PC-3 (cell line): ENCODE measurements at regions of chr3 and their contacts with region 1.

Region 1: DNA sequence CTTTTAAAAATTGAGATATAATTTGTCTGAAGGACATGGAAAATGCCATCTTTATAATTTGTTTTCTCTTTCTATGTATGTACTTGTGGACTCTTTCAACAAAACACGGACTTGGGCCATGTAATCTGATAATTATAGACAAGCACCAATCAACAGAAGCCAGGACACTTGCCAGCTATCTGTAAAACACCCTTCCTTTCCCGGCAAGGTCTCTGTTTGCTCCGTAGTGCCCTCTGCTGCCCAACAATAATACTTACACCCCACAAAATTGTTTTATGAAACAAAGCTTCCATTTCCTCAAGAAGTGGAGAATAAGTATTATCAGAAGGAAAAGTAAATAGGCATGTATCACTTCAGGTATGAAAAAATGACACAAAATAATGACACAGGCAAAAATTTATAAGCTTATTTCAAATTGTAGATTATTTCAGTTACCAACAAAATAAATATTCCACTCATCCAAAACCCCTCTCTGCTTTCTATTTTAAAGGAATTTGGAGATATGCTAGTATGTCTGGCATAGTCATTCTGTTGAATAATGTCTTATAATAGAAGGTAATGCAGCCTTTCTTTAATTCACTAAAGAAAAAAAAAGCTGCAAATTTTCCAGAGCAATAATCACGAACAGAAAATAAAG is 32.8 kb downstream of the MYH15 start:
- DNase-seq: peak; percentile 78
- ATAC-seq: peak; percentile 58
- H3K4me3 ChIP-seq: no peak overlapping the region
- H3K27ac ChIP-seq: no peak overlapping the region
- H3K4me1 ChIP-seq: peaks cover 20% of the 10 kb centered on the region
- H3K27me3 ChIP-seq: no peaks in the 10 kb centered on the region
- CTCF ChIP-seq: peak; percentile 91

Region 2: GRCh38 chr3:107676469-107677309 is 800.9 kb before region 1 on chr3:
- CTCF ChIA-PET with region 1: no interaction called
- POLR2A ChIA-PET with region 1: no interaction called
- intact Hi-C with region 1: loop called (anchors 10 kb)
- DNase-seq: peak; percentile 72
- ATAC-seq: peak; percentile 68
- H3K4me3 ChIP-seq: no peak overlapping the region
- H3K27ac ChIP-seq: no peak overlapping the region
- H3K4me1 ChIP-seq: no peaks in the 10 kb centered on the region
- H3K27me3 ChIP-seq: no peaks in the 10 kb centered on the region
- CTCF ChIP-seq: peak; percentile 76

Region 3: GRCh38 chr3:108090701-108091451 is 386.8 kb before region 1 on chr3 and contains the start of gene CD47:
- CTCF ChIA-PET with region 1: no interaction called
- POLR2A ChIA-PET with region 1: no interaction called
- intact Hi-C with region 1: loop called (anchors 2 kb)
- DNase-seq: peak; percentile 92
- ATAC-seq: peak; percentile 79
- H3K4me3 ChIP-seq: peak within 1 kb of the TSS; percentile 96
- H3K27ac ChIP-seq: peak within 1 kb of the TSS; percentile 17
- H3K4me1 ChIP-seq: peaks cover 15% of the 10 kb centered on the region; the same call in 1 of the 2 replicates
- H3K27me3 ChIP-seq: no peaks in the 10 kb centered on the region
- CTCF ChIP-seq: no peak
- total RNA-seq, gene CD47: 48.4 and 63.6 TPM in 2 replicates

Region 4: GRCh38 chr3:108153451-108153981 is 324.1 kb before region 1 on chr3:
- CTCF ChIA-PET with region 1: interaction called, 4 read pairs
- POLR2A ChIA-PET with region 1: no interaction called
- intact Hi-C with region 1: loop called (anchors 2 kb)
- DNase-seq: peak; percentile 71
- ATAC-seq: peak; percentile 70; the same call in 1 of the 2 replicates
- H3K4me3 ChIP-seq: no peak overlapping the region
- H3K27ac ChIP-seq: no peak overlapping the region
- H3K4me1 ChIP-seq: peaks cover 9% of the 10 kb centered on the region; the same call in 1 of the 2 replicates
- H3K27me3 ChIP-seq: no peaks in the 10 kb centered on the region
- CTCF ChIP-seq: peak; percentile 76

Region 5: GRCh38 chr3:108301695-108302404 is 175.8 kb before region 1 on chr3:
- CTCF ChIA-PET with region 1: no interaction called
- POLR2A ChIA-PET with region 1: no interaction called
- intact Hi-C with region 1: loop called (anchors 10 kb)
- DNase-seq: peak; percentile 51
- ATAC-seq: no peak
- H3K4me3 ChIP-seq: no peak overlapping the region
- H3K27ac ChIP-seq: no peak overlapping the region
- H3K4me1 ChIP-seq: peaks cover 32% of the 10 kb centered on the region
- H3K27me3 ChIP-seq: no peaks in the 10 kb centered on the region
- CTCF ChIP-seq: no peak

Region 6: GRCh38 chr3:108342837-108343478 is 134.7 kb before region 1 on chr3:
- CTCF ChIA-PET with region 1: no interaction called
- POLR2A ChIA-PET with region 1: no interaction called
- intact Hi-C with region 1: loop called (anchors 1 kb)
- DNase-seq: peak; percentile 80
- ATAC-seq: peak; percentile 93
- H3K4me3 ChIP-seq: no peak overlapping the region
- H3K27ac ChIP-seq: no peak overlapping the region
- H3K4me1 ChIP-seq: peaks cover 27% of the 10 kb centered on the region
- H3K27me3 ChIP-seq: no peaks in the 10 kb centered on the region
- CTCF ChIP-seq: no peak

Region 7: GRCh38 chr3:108406661-108407206 is 70.9 kb before region 1 on chr3:
- CTCF ChIA-PET with region 1: no interaction called
- POLR2A ChIA-PET with region 1: no interaction called
- intact Hi-C with region 1: loop called (anchors 1 kb)
- DNase-seq: peak; percentile 74
- ATAC-seq: peak; percentile 89
- H3K4me3 ChIP-seq: no peak overlapping the region
- H3K27ac ChIP-seq: no peak overlapping the region
- H3K4me1 ChIP-seq: peaks cover 9% of the 10 kb centered on the region
- H3K27me3 ChIP-seq: no peaks in the 10 kb centered on the region
- CTCF ChIP-seq: peak; percentile 80